BJ (cell line): ENCODE measurements at regions of chr14 and their contacts with region 1.

Region 1: DNA sequence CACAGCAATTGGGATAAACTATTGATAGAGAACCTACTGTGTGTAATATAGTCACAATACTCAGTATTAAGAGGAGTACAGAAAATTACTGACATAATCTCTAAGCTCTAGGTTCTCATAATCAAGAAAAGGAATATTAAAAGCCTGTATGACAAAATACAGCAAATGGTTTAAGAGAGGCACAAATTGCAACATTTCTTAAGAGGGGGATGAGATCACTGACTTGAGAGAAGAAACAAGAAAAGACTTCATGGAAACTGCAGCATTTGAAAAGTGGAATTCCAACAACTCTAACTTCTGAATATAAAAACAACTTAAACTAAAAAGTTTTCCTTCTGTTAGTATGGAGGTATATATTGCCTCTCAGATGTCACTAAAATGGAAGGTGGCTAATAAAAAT is 89.7 kb downstream of the NUMB start:
- DNase-seq: no peak
- H3K4me3 ChIP-seq: no peak overlapping the region
- H3K27me3 ChIP-seq: no peaks in the 10 kb centered on the region
- CTCF ChIP-seq: no peak

Region 2: DNA sequence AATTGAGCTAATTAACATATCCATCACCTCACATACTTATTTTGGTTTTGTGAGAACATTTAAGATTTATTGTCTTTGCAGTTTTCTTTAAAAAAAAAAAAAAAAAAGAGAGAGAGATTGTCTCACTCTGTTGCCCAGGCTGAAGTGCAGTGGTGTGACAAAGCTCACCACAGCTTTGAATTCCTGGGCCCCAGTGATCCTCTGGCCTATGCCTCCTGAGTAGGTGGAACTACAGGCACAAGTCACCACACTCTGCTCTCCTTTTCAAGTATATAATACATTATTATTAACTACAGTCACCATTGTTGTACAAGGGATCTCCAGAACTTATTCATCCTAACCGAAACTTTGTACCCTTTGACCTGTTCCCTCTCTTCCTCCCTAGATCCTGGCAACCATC is 25.7 kb after region 1 on chr14:
- CTCF ChIA-PET with region 1: no interaction called
- POLR2A ChIA-PET with region 1: interaction called, 15 read pairs
- DNase-seq: no peak
- H3K4me3 ChIP-seq: no peak overlapping the region
- H3K27me3 ChIP-seq: no peaks in the 10 kb centered on the region
- CTCF ChIP-seq: no peak